H1 (cell line): ENCODE measurements at regions of chr17 and their contacts with region 1.

Region 1: GRCh38 chr17:45218895-45219661 is 2.6 kb upstream of the FMNL1 start:
- DNase-seq: peak in 1 of 2 experiments; percentile 99
- H3K4me3 ChIP-seq: no peak overlapping the region
- H3K27ac ChIP-seq: no peak overlapping the region
- H3K4me1 ChIP-seq: peaks cover 0 to 9% (median 3%) of the 10 kb centered on the region in 4 experiments; a peak in 3 of 7 replicates
- H3K27me3 ChIP-seq: peaks cover 15 to 42% (median 35%) of the 10 kb centered on the region in 4 experiments
- CTCF ChIP-seq: peak; percentile 94 to 97 (median 97)
- EP300 ChIP-seq: no peak
- POLR2A ChIP-seq: no peak
- RAD21 ChIP-seq: peak; percentile 96 to 97

Region 2: GRCh38 chr17:45110668-45111611 is 108.1 kb before region 1 on chr17:
- CTCF ChIA-PET with region 1: no interaction called
- POLR2A ChIA-PET with region 1: no interaction called
- DNase-seq: no peak
- H3K4me3 ChIP-seq: no peak overlapping the region
- H3K27ac ChIP-seq: no peak overlapping the region
- H3K4me1 ChIP-seq: peaks cover 0 to 9% (median 4%) of the 10 kb centered on the region in 4 experiments; a peak in 3 of 7 replicates
- H3K27me3 ChIP-seq: no peaks in the 10 kb centered on the region
- CTCF ChIP-seq: no peak
- EP300 ChIP-seq: no peak
- POLR2A ChIP-seq: no peak
- RAD21 ChIP-seq: no peak

Region 3: GRCh38 chr17:45197555-45198334 is 21.3 kb before region 1 on chr17:
- CTCF ChIA-PET with region 1: interaction called, 23 read pairs
- POLR2A ChIA-PET with region 1: no interaction called
- DNase-seq: peak; percentile 90 to 100
- H3K4me3 ChIP-seq: peak overlapping the region in 1 of 4 experiments; percentile 35; a peak in 2 of 8 replicates
- H3K27ac ChIP-seq: no peak overlapping the region
- H3K4me1 ChIP-seq: peaks cover 2 to 9% (median 7%) of the 10 kb centered on the region in 4 experiments; a peak in 5 of 7 replicates
- H3K27me3 ChIP-seq: no peaks in the 10 kb centered on the region
- CTCF ChIP-seq: peak; percentile 97 to 99 (median 99)
- EP300 ChIP-seq: peak in 1 of 2 experiments; percentile 55; a peak in 1 of 3 replicates
- POLR2A ChIP-seq: 0 out of 3 replicates have a peak, but pooled peaks of 1 of the 2 experiments have one; percentile 48
- RAD21 ChIP-seq: peak; percentile 93 to 100

Region 4: DNA sequence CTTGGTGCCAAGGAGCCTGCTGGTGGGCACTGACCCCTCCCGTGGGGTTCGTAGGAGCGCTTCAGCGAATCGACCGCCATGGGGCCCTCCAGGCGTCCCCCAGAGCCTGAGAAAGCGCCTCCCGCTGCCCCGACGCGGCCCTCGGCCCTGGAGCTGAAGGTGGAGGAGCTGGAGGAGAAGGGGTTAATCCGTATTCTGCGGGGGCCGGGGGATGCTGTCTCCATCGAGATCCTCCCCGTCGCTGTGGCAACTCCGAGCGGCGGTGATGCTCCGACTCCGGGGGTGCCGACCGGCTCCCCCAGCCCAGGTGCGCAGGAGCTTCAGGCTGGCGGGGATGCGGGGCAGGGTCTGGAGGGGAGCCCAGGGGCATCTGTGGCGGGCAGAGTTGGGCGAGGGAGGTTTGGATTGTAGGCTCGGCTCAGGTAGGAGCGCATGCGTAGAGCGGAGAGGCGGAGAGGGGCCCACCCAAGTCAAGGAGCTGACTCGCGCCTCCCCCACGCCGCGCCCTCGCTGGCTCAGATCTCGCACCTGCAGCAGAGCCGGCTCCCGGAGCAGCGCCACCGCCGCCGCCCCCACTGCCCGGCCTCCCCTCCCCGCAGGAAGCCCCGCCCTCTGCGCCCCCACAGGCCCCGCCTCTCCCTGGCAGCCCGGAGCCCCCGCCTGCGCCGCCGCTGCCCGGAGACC is 22.4 kb after region 1 on chr17:
- CTCF ChIA-PET with region 1: interaction called, 362 read pairs
- POLR2A ChIA-PET with region 1: interaction called, 4 read pairs
- DNase-seq: peak in 1 of 2 experiments; percentile 84
- H3K4me3 ChIP-seq: peak overlapping the region; percentile 54 to 73 (median 60)
- H3K27ac ChIP-seq: no peak overlapping the region
- H3K4me1 ChIP-seq: peaks cover 0 to 18% (median 13%) of the 10 kb centered on the region in 4 experiments; a peak in 6 of 7 replicates
- H3K27me3 ChIP-seq: peaks cover 0 to 25% (median 18%) of the 10 kb centered on the region in 4 experiments; a peak in 6 of 7 replicates
- CTCF ChIP-seq: no peak
- EP300 ChIP-seq: no peak
- POLR2A ChIP-seq: no peak
- RAD21 ChIP-seq: no peak

Region 5: DNA sequence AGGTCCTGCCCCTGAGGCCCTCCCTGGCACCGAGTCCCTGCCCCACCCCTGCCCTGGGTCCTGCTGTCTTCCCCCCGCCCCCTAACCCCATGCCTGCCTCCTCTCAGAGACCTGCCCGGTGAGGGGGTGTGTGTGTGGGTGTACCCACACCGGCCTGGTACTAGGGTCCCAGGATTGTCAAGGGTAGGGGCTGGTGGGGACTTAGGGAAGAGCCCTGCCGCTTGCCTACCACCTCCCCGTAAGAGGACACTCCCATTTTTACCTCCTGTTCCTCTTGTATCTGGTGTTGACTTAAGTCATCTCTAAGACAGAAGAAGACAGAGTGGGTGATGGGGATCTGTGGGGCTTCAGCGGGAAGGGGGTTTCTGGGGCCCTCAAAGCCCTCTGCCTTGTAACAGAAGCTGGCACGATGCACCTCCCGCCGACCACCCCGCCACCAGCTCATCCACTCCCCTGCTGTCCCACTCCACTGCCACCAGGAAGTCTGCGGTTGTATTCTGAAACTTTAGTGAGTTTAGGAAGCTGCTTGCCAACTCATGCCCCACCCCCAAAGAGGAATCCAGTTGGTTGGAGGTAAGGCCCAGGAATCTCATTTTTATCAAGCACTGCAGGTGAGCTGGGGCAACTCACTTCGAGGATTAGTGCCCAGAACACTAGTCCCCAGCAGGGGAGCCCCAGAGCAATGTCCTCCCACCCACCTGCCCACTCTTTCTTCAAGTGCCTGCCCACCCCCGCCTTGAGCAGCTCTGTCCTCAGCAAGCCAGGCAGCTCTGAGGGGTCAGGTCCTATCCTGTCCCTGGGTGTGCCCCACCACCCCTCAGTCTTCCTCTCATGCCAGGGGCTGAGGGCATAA is 37.3 kb after region 1 on chr17:
- CTCF ChIA-PET with region 1: interaction called, 362 read pairs
- POLR2A ChIA-PET with region 1: interaction called, 3 read pairs
- DNase-seq: no peak
- H3K4me3 ChIP-seq: peak overlapping the region in 1 of 4 experiments; percentile 34; a peak in 1 of 8 replicates
- H3K27ac ChIP-seq: no peak overlapping the region
- H3K4me1 ChIP-seq: peaks cover 0 to 14% (median 5%) of the 10 kb centered on the region in 4 experiments; a peak in 6 of 7 replicates
- H3K27me3 ChIP-seq: peaks cover 0 to 5% (median 2%) of the 10 kb centered on the region in 4 experiments; a peak in 3 of 7 replicates
- CTCF ChIP-seq: peak; percentile 6 to 19 (median 7); a peak in 2 of 4 replicates
- EP300 ChIP-seq: no peak
- POLR2A ChIP-seq: no peak
- RAD21 ChIP-seq: 0 out of 4 replicates have a peak, but pooled peaks of 1 of the 2 experiments have one; percentile 3

Region 6: GRCh38 chr17:45270828-45271418 is 51.8 kb after region 1 on chr17:
- CTCF ChIA-PET with region 1: interaction called, 25 read pairs
- POLR2A ChIA-PET with region 1: no interaction called
- DNase-seq: peak in 1 of 2 experiments; percentile 91
- H3K4me3 ChIP-seq: no peak overlapping the region
- H3K27ac ChIP-seq: no peak overlapping the region
- H3K4me1 ChIP-seq: peaks cover 0 to 1% (median 0%) of the 10 kb centered on the region in 4 experiments; a peak in 1 of 7 replicates
- H3K27me3 ChIP-seq: no peaks in the 10 kb centered on the region
- CTCF ChIP-seq: peak; percentile 93 to 100 (median 96)
- EP300 ChIP-seq: no peak
- POLR2A ChIP-seq: no peak
- RAD21 ChIP-seq: peak; percentile 69 to 81

Region 7: GRCh38 chr17:45371414-45372327 is 152.6 kb after region 1 on chr17:
- CTCF ChIA-PET with region 1: interaction called, 24 read pairs
- POLR2A ChIA-PET with region 1: no interaction called
- DNase-seq: peak; percentile 84 to 92
- H3K4me3 ChIP-seq: peak overlapping the region in 3 of 4 experiments; percentile 1 to 44 (median 14); a peak in 5 of 8 replicates
- H3K27ac ChIP-seq: peak overlapping the region; percentile 79
- H3K4me1 ChIP-seq: peaks cover 8 to 28% (median 16%) of the 10 kb centered on the region in 4 experiments
- H3K27me3 ChIP-seq: no peaks in the 10 kb centered on the region
- CTCF ChIP-seq: no peak
- EP300 ChIP-seq: 0 out of 3 replicates have a peak, but pooled peaks of 1 of the 2 experiments have one; percentile 45
- POLR2A ChIP-seq: peak; percentile 50 to 53; a peak in 2 of 3 replicates
- RAD21 ChIP-seq: no peak; a peak in 1 of 4 replicates

Region 8: DNA sequence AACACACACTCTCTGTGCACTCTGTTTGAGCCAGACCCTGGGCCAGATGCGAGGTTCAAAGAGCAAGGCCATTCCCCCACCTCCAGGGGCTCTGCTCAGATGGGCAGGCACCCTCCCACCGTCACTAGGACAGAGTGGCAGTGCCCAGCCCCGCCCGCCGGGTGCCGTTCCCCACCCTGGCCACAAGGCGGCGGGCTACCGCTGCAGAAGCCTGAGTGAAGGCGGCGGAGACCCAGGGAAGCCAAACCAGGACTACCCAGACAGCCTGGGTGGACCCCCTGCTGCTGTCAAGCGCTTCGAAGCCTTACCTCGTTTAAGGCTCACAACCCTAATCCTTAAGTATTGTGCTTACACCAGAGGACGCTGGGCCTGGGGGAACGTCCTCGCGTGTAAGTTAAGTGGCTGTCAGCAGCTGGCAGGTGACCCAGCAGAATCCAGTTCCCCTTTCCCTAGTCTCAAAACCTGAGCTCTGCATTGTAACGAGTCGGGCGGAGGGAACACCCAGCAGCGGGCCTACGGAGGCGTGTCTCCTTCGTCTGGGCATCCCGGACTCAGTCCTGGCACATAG is 209.1 kb after region 1 on chr17:
- CTCF ChIA-PET with region 1: interaction called, 16 read pairs
- POLR2A ChIA-PET with region 1: interaction called, 3 read pairs
- DNase-seq: peak in 1 of 2 experiments; percentile 96
- H3K4me3 ChIP-seq: peak overlapping the region in 1 of 4 experiments; percentile 65; a peak in 3 of 8 replicates
- H3K27ac ChIP-seq: no peak overlapping the region
- H3K4me1 ChIP-seq: peaks cover 6 to 30% (median 20%) of the 10 kb centered on the region in 4 experiments
- H3K27me3 ChIP-seq: peaks cover 21 to 46% (median 40%) of the 10 kb centered on the region in 4 experiments
- CTCF ChIP-seq: peak; percentile 92 to 94 (median 92)
- EP300 ChIP-seq: peak in 1 of 2 experiments; percentile 15; a peak in 1 of 3 replicates
- POLR2A ChIP-seq: no peak
- RAD21 ChIP-seq: peak; percentile 74 to 87